Calu3 (cell line): ENCODE measurements at regions of chr18 and their contacts with region 1.

Region 1: DNA sequence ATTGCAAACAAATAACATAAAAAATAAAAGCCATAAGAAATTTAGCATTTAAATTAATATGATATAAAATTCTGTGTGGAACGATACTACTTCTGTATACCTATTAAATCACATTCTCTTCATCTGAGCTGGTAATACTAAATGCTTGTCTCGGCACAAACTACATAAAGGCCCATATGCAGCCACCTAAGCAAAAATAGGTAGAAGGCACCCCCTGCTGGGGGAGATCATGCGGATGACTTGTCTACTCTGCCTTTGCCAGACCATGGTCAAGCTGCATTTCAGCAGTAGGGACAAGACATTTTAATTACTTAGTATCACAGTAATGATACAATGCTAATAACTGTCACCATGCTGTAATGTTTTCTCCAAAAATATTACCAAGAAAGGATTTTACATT is 108.0 kb downstream of the CDH19 start:
- DNase-seq: peak; percentile 90
- H3K4me3 Mint-ChIP-seq: no peak overlapping the region
- H3K27ac Mint-ChIP-seq: no peak overlapping the region
- H3K4me1 Mint-ChIP-seq: peaks cover 6% of the 10 kb centered on the region
- H3K27me3 Mint-ChIP-seq: no peaks in the 10 kb centered on the region
- CTCF ChIP-seq: peak; percentile 67

Region 2: DNA sequence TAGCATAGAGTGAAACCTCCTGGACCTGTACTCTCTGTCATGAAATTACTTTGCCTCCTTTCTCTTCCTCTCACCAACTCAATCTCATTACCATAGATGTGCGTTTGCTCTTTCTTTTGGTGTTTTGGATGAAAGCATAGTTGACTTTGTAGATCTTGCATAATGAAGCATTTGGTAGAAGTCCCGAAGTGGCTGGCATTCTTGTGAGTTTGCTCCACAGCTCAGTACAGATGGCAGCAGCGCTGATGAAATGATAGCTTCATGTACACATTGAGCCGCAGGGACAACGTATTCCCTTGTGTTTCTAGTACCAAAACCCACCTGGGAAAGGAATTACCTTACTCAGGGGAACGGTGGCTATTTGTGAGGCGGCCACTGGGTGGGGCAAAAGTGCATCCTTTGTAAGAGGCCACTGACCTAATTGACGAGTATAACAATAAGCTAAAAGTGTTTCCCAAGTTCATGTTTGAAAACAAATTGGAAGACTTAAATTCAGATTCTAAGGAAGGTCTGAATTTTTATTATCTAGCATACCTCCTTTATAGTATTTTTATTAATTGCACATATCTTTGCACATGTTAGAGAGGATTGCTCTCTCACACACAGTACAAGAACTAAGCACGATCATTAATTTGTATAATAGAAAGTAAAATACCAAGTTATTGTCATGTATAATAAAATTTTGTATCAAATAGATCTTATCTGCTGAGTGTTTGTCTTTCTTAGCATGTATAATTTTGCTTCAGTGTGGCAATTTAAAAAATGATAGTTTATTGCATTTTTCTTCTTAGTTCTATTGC is 770.4 kb before region 1 on chr18:
- CTCF ChIA-PET with region 1: interaction called, 4 read pairs
- intact Hi-C with region 1: loop called (anchors 2 kb)
- DNase-seq: peak; percentile 69
- H3K4me3 Mint-ChIP-seq: no peak overlapping the region
- H3K27ac Mint-ChIP-seq: no peak overlapping the region
- H3K4me1 Mint-ChIP-seq: peaks cover 22% of the 10 kb centered on the region
- H3K27me3 Mint-ChIP-seq: no peaks in the 10 kb centered on the region
- CTCF ChIP-seq: peak; percentile 73

Region 3: DNA sequence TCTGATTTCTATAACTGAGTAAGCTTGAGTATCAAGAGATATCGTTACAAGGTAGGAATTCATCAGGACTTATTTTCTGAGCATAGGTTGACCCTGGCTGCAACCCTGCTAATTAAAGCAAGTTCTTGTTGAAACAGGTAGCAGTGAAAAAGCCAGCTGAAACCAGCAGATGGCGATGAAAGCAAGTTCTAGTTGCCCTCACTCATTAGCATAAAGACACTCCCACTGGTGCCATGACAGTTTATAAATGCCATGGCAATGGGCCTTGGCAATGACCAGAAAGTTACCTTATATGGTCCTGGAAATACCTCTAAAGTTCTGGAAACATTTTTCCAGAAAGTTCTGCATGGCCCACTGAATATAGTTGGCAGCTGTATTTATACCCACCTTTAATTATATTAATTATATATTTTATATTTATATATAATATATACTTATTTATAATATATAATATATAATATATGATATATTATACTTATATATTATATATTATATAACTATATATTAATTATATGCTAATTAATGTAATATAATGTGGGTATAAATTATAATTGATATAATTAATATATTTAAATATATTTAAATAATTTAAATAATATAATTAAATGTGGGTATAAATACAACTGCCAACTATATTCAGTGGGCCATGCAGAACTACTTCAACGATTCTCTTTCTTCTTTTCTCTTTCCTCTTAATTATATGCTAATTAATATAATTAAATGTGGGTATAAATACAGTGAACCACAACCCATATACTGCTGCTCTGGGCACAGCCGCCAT is 557.1 kb before region 1 on chr18:
- CTCF ChIA-PET with region 1: interaction called, 5 read pairs
- intact Hi-C with region 1: loop called (anchors 1 kb)
- DNase-seq: peak; percentile 43
- H3K4me3 Mint-ChIP-seq: no peak overlapping the region
- H3K27ac Mint-ChIP-seq: no peak overlapping the region
- H3K4me1 Mint-ChIP-seq: peaks cover 18% of the 10 kb centered on the region
- H3K27me3 Mint-ChIP-seq: no peaks in the 10 kb centered on the region
- CTCF ChIP-seq: no peak

Region 4: DNA sequence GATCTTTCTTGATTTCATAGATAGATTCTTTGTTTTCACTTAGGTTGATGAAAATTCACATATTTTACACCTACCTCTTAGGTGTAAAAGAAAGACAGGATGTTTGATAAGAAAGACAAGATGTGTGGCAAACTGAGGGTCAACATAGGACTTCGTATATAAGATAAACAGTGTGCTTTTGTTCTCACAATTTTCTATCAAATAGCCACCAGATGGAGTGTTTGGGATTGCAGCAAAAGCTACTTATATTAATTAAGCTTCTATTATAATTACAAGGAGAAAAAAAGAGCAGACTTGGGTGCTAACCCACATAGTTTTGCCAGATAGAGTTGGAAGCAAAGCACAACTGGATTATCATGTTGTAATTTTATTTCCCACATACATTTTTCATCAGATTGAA is 512.1 kb before region 1 on chr18:
- CTCF ChIA-PET with region 1: interaction called, 6 read pairs
- intact Hi-C with region 1: loop called (anchors 5 kb)
- DNase-seq: no peak
- H3K4me3 Mint-ChIP-seq: no peak overlapping the region
- H3K27ac Mint-ChIP-seq: no peak overlapping the region
- H3K4me1 Mint-ChIP-seq: no peaks in the 10 kb centered on the region
- H3K27me3 Mint-ChIP-seq: no peaks in the 10 kb centered on the region
- CTCF ChIP-seq: no peak

Region 5: DNA sequence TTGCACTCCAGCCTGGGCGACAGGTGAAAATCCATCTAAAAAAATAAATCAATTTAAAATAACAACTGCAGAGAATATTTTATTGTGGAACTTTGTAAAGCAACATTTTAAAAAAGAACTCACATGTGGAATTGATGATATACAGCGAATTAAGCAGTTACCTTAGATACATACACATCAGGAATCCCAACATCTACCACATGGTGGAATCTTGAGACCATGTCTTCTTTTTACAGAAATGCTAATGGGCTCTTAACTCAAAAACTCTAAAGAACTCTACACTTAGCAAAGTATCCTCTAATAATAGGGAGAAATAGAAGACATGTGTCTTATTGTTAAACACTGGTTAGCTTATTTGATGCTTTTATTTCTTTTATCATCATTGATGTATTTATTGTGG is 371.4 kb before region 1 on chr18:
- CTCF ChIA-PET with region 1: no interaction called
- intact Hi-C with region 1: loop called (anchors 1 kb)
- DNase-seq: peak; percentile 4
- H3K4me3 Mint-ChIP-seq: no peak overlapping the region
- H3K27ac Mint-ChIP-seq: no peak overlapping the region
- H3K4me1 Mint-ChIP-seq: no peaks in the 10 kb centered on the region
- H3K27me3 Mint-ChIP-seq: no peaks in the 10 kb centered on the region
- CTCF ChIP-seq: peak; percentile 27

Region 6: DNA sequence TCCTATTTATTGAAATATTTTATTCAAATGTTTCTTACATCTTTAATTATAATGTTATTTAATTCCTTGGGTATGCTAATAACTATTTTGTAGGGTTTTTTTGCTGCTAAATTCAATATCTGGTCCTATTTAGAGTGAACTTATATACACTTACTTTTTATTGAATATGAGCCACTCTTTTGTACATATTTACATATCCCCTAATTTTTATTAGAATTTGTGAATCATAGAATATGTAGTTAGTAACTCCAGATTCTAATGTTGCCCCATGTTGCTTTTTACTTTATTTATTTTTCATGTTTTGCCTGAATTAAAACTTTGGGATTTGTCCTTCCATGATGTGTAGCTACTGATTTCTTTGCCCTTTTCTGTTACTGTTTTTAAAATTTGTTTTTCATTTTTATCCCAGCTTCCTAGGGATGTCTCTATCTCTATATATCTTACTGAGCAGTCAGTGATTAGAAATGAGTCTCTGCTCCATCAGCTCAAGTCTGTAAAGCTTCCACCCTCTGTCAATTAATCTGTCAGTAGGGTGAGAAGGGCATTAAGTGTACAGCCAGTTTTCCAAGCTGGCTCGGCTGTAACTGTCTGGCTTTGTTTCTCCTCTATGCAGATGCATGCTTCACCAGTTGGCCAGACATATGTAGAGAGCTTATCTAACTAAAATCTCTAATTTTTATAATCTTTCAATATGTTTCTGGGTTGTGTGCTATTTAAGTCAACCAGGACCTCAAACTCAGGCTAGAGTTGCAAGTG is 148.8 kb before region 1 on chr18:
- CTCF ChIA-PET with region 1: no interaction called
- intact Hi-C with region 1: loop called (anchors 10 kb)
- DNase-seq: no peak
- H3K4me3 Mint-ChIP-seq: no peak overlapping the region
- H3K27ac Mint-ChIP-seq: no peak overlapping the region
- H3K4me1 Mint-ChIP-seq: no peaks in the 10 kb centered on the region
- H3K27me3 Mint-ChIP-seq: no peaks in the 10 kb centered on the region
- CTCF ChIP-seq: no peak

Region 7: GRCh38 chr18:66749030-66749429 is 253.2 kb after region 1 on chr18:
- CTCF ChIA-PET with region 1: interaction called, 3 read pairs
- intact Hi-C with region 1: loop called (anchors 5 kb)
- DNase-seq: peak; percentile 34
- H3K4me3 Mint-ChIP-seq: no peak overlapping the region
- H3K27ac Mint-ChIP-seq: no peak overlapping the region
- H3K4me1 Mint-ChIP-seq: peaks cover 25% of the 10 kb centered on the region
- H3K27me3 Mint-ChIP-seq: no peaks in the 10 kb centered on the region
- CTCF ChIP-seq: no peak